Esophagus muscularis mucosa (tissue), 4 donors: ENCODE measurements at regions of chr20 and their contacts with region 1.

Region 1: GRCh38 chr20:48620519-48621254 is 207.1 kb downstream of the PREX1 start:
- DNase-seq: no peak
- H3K4me3 ChIP-seq: peak overlapping the region; percentile 37 to 43 (median 40)
- H3K27ac ChIP-seq: peak overlapping the region; percentile 2 to 53 (median 30)
- H3K4me1 ChIP-seq: peaks cover 20 to 27% (median 22%) of the 10 kb centered on the region in 4 donors
- H3K27me3 ChIP-seq: no peaks in the 10 kb centered on the region
- CTCF ChIP-seq: peak; percentile 80 to 95 (median 82)
- EP300 ChIP-seq: no peak
- POLR2A ChIP-seq: no peak

Region 2: GRCh38 chr20:47663333-47664067 is 957.2 kb before region 1 on chr20:
- intact Hi-C with region 1: loop called (anchors 2 kb)
- DNase-seq: no peak
- H3K4me3 ChIP-seq: no peak overlapping the region
- H3K27ac ChIP-seq: peak overlapping the region in 2 of 4 donors; percentile 12 to 31
- H3K4me1 ChIP-seq: peaks cover 12 to 34% (median 18%) of the 10 kb centered on the region in 4 donors
- H3K27me3 ChIP-seq: no peaks in the 10 kb centered on the region
- CTCF ChIP-seq: peak; percentile 95 to 98 (median 96)
- EP300 ChIP-seq: no peak
- POLR2A ChIP-seq: no peak

Region 3: GRCh38 chr20:47725248-47725973 is 895.3 kb before region 1 on chr20:
- intact Hi-C with region 1: loop called (anchors 5 kb)
- DNase-seq: peak; percentile 95
- H3K4me3 ChIP-seq: no peak overlapping the region
- H3K27ac ChIP-seq: no peak overlapping the region
- H3K4me1 ChIP-seq: peaks cover 4 to 39% (median 36%) of the 10 kb centered on the region in 4 donors
- H3K27me3 ChIP-seq: no peaks in the 10 kb centered on the region
- CTCF ChIP-seq: peak; percentile 89 to 94 (median 92)
- EP300 ChIP-seq: no peak
- POLR2A ChIP-seq: no peak

Region 4: DNA sequence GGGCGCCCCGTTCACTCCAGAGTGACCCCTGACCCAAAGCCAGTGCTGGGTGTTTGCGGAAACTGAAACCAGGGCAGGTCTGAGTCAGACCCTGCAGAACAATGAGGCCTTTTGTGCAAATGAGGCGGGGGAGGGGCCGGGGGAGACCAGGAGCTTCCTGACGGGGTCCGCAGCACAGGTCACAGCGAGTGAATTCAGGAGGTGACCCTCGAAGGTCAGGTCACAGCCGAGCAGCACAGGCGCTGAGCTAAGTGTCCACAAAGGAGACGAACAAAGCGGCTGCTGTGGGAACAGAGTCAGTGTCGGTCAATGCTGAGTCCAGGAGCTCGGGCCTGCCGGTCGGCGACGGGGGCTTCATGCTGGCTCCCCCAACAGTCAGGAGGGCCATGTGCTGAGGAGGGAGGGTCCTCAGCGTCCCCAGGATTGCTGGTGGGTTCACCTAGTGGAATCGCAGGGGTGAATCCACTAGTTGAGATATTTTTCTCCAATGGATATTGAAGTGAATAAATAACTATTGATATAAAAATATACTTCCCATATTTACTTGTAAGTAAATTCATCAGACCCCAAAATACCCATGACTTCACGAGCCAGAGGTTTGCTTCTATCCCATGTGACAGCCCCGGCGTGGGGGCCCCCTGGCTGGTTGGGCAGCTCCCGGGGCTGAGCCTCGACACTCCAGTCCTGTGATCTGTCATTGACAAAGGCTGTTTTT is 647.0 kb before region 1 on chr20:
- intact Hi-C with region 1: loop called (anchors 10 kb)
- DNase-seq: no peak
- H3K4me3 ChIP-seq: no peak overlapping the region
- H3K27ac ChIP-seq: peak overlapping the region; percentile 28 to 60 (median 52)
- H3K4me1 ChIP-seq: peaks cover 19 to 30% (median 26%) of the 10 kb centered on the region in 4 donors
- H3K27me3 ChIP-seq: no peaks in the 10 kb centered on the region
- CTCF ChIP-seq: no peak
- EP300 ChIP-seq: no peak
- POLR2A ChIP-seq: no peak

Region 5: DNA sequence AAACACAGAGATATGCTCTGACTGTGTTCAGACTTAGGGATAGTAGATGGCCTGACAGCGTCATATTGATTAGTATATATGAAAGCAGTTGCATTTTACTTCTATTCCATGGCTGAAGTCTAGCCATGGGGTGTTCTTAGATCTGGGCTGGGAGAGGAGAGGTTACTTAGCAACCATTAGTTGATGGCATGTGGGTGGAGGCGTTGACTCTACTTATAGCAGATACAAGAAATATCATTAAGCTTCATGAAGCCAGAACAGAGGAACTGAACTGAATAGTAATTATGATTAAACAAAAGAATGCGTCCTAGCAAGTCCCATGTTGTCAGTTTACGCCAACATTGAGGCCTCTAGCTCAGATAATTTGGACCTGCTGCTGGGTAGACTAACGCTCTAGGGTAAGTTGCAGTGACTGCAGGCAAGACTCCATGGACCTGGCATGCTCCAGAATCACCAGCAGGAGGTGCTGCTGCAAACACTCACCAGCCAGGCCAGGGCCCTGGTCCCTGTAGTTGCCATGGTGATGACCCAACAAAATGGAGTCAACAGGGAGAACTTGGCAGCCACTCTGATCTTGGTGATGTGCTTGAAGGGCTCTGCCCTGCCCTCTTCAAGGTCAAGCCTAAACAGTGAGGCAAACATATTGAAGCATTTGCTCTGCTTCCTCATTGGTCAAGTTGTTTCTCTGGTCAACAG is 270.2 kb before region 1 on chr20:
- intact Hi-C with region 1: loop called (anchors 10 kb)
- DNase-seq: no peak
- H3K4me3 ChIP-seq: no peak overlapping the region
- H3K27ac ChIP-seq: no peak overlapping the region
- H3K4me1 ChIP-seq: peaks cover 0 to 6% (median 4%) of the 10 kb centered on the region in 4 donors
- H3K27me3 ChIP-seq: no peaks in the 10 kb centered on the region
- CTCF ChIP-seq: peak in 1 of 3 experiments; percentile 18
- EP300 ChIP-seq: no peak
- POLR2A ChIP-seq: no peak

Region 6: GRCh38 chr20:48574393-48574792 is 46.3 kb before region 1 on chr20:
- intact Hi-C with region 1: no loop called
- DNase-seq: no peak
- H3K4me3 ChIP-seq: no peak overlapping the region
- H3K27ac ChIP-seq: no peak overlapping the region
- H3K4me1 ChIP-seq: no peaks in the 10 kb centered on the region
- H3K27me3 ChIP-seq: no peaks in the 10 kb centered on the region
- CTCF ChIP-seq: no peak
- EP300 ChIP-seq: no peak
- POLR2A ChIP-seq: no peak